ENCODE measurements at regions of chr12 and their contacts with region 1.

Region 1: DNA sequence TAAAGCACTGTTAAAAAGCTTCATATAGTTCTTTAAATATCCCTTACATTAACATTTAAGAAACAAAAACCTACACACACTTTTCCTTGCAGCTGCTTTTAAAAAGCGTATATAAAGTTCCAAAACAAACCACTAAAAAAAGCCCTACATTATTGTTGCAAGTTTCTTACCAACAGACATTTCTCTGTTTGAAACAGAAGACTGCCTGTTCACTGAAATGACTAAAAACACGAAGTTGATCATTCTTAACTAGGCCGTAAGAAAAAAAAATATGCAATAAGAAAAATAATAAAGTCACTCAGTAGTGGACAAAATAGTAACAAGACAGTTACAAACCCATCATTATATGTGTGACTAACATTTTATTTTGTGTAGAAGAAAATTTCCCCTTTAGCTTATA is 37.3 kb downstream of the KIF21A start:
- DNase-seq: no peak
- ATAC-seq: no peak
- H3K4me3 ChIP-seq: no peak overlapping the region
- H3K27ac ChIP-seq: no peak overlapping the region
- H3K4me1 ChIP-seq: no peaks in the 10 kb centered on the region
- H3K27me3 ChIP-seq: no peaks in the 10 kb centered on the region
- CTCF ChIP-seq: no peak
- EP300 ChIP-seq: no peak
- POLR2A ChIP-seq: no peak
- RAD21 ChIP-seq: no peak

Region 2: GRCh38 chr12:39319187-39319586 is 86.4 kb before region 1 on chr12:
- CTCF ChIA-PET with region 1: no interaction called
- POLR2A ChIA-PET with region 1: no interaction called
- in situ Hi-C with region 1: no loop called
- intact Hi-C with region 1: no loop called
- DNase-seq: no peak
- ATAC-seq: peak; percentile 39; the same call in 1 of the 3 replicates
- H3K4me3 ChIP-seq: no peak overlapping the region
- H3K27ac ChIP-seq: no peak overlapping the region
- H3K4me1 ChIP-seq: 0 out of 2 replicates have a peak, but pooled peaks cover 5% of the 10 kb centered on the region
- H3K27me3 ChIP-seq: no peaks in the 10 kb centered on the region
- CTCF ChIP-seq: no peak
- EP300 ChIP-seq: no peak
- POLR2A ChIP-seq: no peak
- RAD21 ChIP-seq: no peak

Region 3: GRCh38 chr12:39354955-39355354 is 50.6 kb before region 1 on chr12:
- CTCF ChIA-PET with region 1: no interaction called
- POLR2A ChIA-PET with region 1: no interaction called
- in situ Hi-C with region 1: no loop called
- intact Hi-C with region 1: loop called (anchors 5 kb)
- DNase-seq: no peak
- ATAC-seq: no peak
- H3K4me3 ChIP-seq: no peak overlapping the region
- H3K27ac ChIP-seq: no peak overlapping the region
- H3K4me1 ChIP-seq: no peaks in the 10 kb centered on the region
- H3K27me3 ChIP-seq: no peaks in the 10 kb centered on the region
- CTCF ChIP-seq: no peak
- EP300 ChIP-seq: no peak
- POLR2A ChIP-seq: no peak
- RAD21 ChIP-seq: no peak